Mammary epithelial cell (primary cell): ENCODE measurements at regions of chr2 and their contacts with region 1.

Region 1: GRCh38 chr2:58571181-58571852 is 330.2 kb upstream of the FANCL start:
- DNase-seq: peak; percentile 69
- H3K4me3 ChIP-seq: no peak overlapping the region
- H3K27ac ChIP-seq: no peak overlapping the region
- H3K4me1 ChIP-seq: peaks cover 5% of the 10 kb centered on the region
- H3K27me3 ChIP-seq: no peaks in the 10 kb centered on the region
- CTCF ChIP-seq: peak; percentile 82 to 88

Region 2: DNA sequence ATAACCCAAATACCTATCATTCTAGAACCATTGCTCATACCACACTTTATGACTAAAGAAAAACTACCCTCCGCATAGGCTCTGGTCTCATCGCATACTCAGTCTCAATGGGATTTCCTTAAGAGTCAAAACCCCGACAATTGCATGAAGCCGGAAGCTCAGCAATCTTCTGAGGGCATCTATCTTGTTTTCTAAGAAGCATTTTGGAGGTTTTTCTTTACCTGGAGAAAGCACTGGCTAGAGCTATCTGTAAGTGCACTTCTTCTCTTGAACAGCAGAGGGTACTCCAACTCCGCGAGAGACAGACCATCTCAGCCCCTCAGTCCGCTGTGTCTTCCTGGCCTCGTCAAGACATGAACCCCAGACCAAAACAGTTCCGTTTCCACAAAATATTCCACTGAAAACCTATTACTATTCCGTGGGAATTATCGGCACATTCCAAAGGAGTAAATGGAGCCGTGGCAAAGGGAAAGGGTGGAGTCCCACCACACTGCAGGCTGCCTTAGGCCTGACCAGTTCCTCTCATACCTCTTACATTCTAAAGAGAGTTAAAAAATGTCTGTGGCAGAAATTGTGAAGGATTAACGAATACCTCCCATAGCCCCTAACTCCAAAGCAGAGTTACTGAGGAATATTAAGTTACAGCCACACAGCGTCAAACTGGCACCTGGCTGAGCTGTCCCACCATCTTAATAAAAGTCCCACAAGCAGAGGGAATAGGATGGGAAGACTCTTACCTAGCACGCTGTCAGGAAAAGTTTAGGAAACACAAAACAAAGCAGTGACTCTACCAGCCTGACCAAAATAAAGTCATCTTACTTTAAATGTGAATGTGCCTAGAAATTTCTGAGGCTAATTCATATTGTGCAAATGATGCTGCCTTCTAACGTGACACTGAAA is 850.3 kb before region 1 on chr2:
- CTCF ChIA-PET with region 1: no interaction called
- dilution Hi-C with region 1: no loop called
- in situ Hi-C with region 1: no loop called
- intact Hi-C with region 1: loop called (anchors 1 kb)
- DNase-seq: peak; percentile 42
- H3K4me3 ChIP-seq: peak overlapping the region in 1 of 3 experiments; percentile 22
- H3K27ac ChIP-seq: no peak overlapping the region
- H3K4me1 ChIP-seq: peaks cover 5% of the 10 kb centered on the region
- H3K27me3 ChIP-seq: no peaks in the 10 kb centered on the region
- CTCF ChIP-seq: peak; percentile 71 to 84

Region 3: GRCh38 chr2:57759822-57760300 is 811.5 kb before region 1 on chr2:
- CTCF ChIA-PET with region 1: no interaction called
- dilution Hi-C with region 1: no loop called
- in situ Hi-C with region 1: no loop called
- intact Hi-C with region 1: loop called (anchors 5 kb)
- DNase-seq: peak; percentile 58
- H3K4me3 ChIP-seq: peak overlapping the region; percentile 5 to 25 (median 24)
- H3K27ac ChIP-seq: no peak overlapping the region
- H3K4me1 ChIP-seq: peaks cover 3% of the 10 kb centered on the region
- H3K27me3 ChIP-seq: no peaks in the 10 kb centered on the region
- CTCF ChIP-seq: peak; percentile 65 to 96

Region 4: DNA sequence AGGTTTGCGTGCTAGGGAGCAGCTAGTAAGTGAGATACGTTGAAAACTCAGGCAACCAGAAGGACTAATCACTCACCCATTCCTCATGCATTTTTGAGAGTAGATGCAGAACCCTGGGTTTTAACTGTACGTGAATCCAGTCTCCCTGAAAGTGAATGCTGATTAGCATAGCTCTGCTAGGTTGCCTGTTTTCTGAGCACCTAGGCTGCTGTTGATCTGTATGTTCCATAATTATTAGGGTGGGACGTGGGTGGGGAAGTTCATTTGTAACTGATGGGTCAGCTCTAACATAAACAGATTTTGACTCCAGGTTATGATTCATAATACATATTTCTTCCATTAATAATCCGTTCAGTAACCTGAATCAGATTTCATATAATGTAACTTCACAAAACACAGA is 48.8 kb after region 1 on chr2:
- CTCF ChIA-PET with region 1: no interaction called
- dilution Hi-C with region 1: no loop called
- in situ Hi-C with region 1: no loop called
- intact Hi-C with region 1: loop called (anchors 1 kb)
- DNase-seq: peak; percentile 80
- H3K4me3 ChIP-seq: peak overlapping the region in 2 of 3 experiments; percentile 22 to 25
- H3K27ac ChIP-seq: peak overlapping the region; percentile 95
- H3K4me1 ChIP-seq: peaks cover 21% of the 10 kb centered on the region
- H3K27me3 ChIP-seq: no peaks in the 10 kb centered on the region
- CTCF ChIP-seq: no peak

Region 5: GRCh38 chr2:58649756-58650155 is 78.4 kb after region 1 on chr2:
- CTCF ChIA-PET with region 1: no interaction called
- dilution Hi-C with region 1: loop called (anchors 5 kb)
- in situ Hi-C with region 1: no loop called
- intact Hi-C with region 1: no loop called
- DNase-seq: no peak
- H3K4me3 ChIP-seq: no peak overlapping the region
- H3K27ac ChIP-seq: no peak overlapping the region
- H3K4me1 ChIP-seq: no peaks in the 10 kb centered on the region
- H3K27me3 ChIP-seq: peaks cover 2% of the 10 kb centered on the region
- CTCF ChIP-seq: no peak

Region 6: GRCh38 chr2:58680755-58681310 is 109.5 kb after region 1 on chr2:
- CTCF ChIA-PET with region 1: interaction called, 14 read pairs
- dilution Hi-C with region 1: no loop called
- in situ Hi-C with region 1: loop called (anchors 5 to 25 kb)
- intact Hi-C with region 1: loop called (anchors 1 kb)
- DNase-seq: no peak
- H3K4me3 ChIP-seq: no peak overlapping the region
- H3K27ac ChIP-seq: no peak overlapping the region
- H3K4me1 ChIP-seq: no peaks in the 10 kb centered on the region
- H3K27me3 ChIP-seq: no peaks in the 10 kb centered on the region
- CTCF ChIP-seq: peak; percentile 6 to 26